Activated CD4-positive, alpha-beta memory T cell treated with anti-CD3 and anti-CD28 coated beads, Interleukin-2, amount 10 ng/mL, durations not matched to agents 7 days and 5 days (primary cell): ENCODE measurements at regions of chr6 and their contacts with region 1.

Region 1: DNA sequence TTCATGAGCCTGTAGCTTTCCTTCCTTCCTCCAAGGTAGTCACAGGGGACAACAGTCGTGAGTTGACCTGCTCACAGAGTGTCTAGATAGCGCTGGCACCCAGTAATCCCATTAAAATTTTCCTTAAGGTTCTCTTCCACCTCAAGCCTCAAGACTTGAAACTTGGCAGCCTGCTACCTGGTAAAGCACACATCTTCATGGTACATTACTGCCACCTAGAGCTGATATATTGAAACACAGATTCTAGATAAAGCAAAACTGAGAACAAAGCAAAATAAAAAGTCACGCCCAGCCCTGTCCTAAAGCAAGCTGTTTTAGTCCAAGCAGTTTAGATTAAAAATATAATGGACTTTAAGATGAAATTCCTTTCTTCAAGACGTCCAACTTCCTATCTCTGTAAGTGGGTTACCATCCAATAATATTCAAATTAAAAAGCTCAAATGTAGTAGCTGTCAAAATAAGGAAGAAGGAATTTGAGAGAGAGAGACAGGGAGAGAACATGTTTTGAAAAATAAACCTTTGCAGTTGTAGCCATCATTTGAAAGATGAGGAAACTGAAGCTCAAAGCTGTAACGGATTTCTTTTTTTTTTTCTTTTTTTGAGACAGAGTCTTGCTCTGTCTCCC is 50.7 kb upstream of the CD83 start:
- DNase-seq: no peak
- H3K4me3 Mint-ChIP-seq: no peak overlapping the region
- H3K27ac Mint-ChIP-seq: no peak overlapping the region
- H3K4me1 Mint-ChIP-seq: peaks cover 20% of the 10 kb centered on the region
- H3K27me3 Mint-ChIP-seq: peaks cover 18% of the 10 kb centered on the region

Region 2: DNA sequence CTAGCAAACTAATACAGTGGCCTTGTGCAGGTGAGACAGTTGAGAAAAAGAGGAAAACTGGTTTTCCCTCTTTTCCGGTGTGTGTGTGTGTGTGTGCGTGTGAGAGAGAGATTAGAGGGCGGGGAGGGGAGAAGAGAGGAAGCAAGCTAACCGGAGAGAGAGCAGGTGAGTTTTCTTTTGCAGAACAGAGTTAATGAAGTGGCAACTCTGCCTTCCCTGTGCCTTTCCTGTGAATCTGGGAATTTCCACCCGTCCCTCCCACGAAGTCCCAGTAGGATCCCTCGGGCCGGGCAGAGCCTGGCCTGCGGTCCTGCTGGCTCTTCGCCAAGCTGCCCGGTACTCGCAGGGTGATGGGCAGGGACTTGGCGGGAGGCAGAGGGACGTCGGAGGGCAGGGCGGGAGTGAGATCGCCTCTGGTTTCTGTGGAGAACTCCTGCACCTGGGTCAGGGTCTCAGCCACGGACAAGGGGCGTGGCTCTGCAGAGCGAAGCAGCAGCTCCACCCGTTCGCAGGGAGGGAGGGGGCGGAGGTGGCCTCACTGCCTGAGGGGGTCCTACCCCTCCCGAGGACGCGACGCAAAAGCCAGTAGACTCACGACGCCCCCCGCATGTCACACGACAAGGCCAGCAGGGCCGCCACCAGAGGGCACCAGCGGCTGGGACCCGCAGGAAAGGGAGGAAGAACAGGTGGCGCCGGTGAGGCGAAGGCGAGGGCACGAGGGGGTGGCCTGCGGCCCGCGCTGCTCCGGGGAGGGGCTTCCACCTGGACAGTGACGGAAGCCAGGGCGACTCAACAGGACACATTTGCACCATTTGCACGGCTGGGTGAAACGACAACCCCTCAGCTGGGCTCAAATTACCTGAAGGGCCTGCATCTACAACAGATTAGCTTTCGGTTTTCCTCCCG is 193.4 kb before region 1 on chr6:
- CTCF ChIA-PET with region 1: interaction called, 21 read pairs
- POLR2A ChIA-PET with region 1: no interaction called
- DNase-seq: peak; percentile 69
- H3K4me3 Mint-ChIP-seq: peak overlapping the region; percentile 63
- H3K27ac Mint-ChIP-seq: no peak overlapping the region
- H3K4me1 Mint-ChIP-seq: peaks cover 10% of the 10 kb centered on the region
- H3K27me3 Mint-ChIP-seq: peaks cover 24% of the 10 kb centered on the region

Region 3: DNA sequence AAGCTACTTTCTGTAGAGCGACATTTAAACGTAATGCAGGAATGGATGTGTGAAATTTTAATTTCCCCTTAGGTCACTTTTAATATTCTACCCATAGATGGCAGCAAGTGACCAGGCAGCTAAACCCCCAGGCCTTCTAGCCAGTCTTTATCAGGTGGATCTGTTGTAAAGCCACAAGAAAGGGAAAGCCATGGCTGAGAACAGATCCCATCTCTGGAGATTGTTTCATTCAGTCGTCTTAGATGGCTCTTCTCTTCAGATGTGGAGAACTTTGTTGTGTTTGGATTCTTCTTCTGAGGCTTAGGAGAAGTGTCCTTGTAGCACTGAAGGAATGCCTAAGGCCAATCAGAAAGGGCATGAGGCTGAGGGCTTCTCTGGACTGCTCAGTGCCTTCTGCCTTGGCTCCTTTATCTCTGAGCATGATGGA is 157.9 kb before region 1 on chr6:
- CTCF ChIA-PET with region 1: interaction called, 36 read pairs
- POLR2A ChIA-PET with region 1: interaction called, 4 read pairs
- DNase-seq: peak; percentile 39
- H3K4me3 Mint-ChIP-seq: no peak overlapping the region
- H3K27ac Mint-ChIP-seq: no peak overlapping the region
- H3K4me1 Mint-ChIP-seq: no peaks in the 10 kb centered on the region
- H3K27me3 Mint-ChIP-seq: peaks cover 53% of the 10 kb centered on the region

Region 4: DNA sequence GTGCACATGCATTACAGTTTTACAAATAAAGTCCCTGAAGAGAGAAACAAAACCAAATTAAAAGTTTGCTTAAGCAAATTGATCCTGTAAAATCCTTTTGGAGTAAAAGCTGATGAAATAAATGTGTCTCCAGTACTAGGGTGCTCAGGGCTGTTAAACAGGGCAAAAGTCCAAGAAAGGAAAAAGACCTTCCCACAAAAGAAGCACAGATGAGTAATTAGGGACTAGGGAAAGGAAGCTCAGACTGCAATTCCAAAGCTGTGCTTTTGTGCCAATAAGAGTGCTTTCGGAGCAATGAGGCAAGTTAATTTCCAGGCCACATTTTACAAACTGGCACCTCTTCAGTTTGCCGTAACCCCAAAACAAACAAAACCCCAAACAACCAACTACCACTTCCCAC is 152.5 kb before region 1 on chr6:
- CTCF ChIA-PET with region 1: interaction called, 36 read pairs
- POLR2A ChIA-PET with region 1: interaction called, 4 read pairs
- DNase-seq: no peak
- H3K4me3 Mint-ChIP-seq: no peak overlapping the region
- H3K27ac Mint-ChIP-seq: no peak overlapping the region
- H3K4me1 Mint-ChIP-seq: no peaks in the 10 kb centered on the region
- H3K27me3 Mint-ChIP-seq: peaks cover 48% of the 10 kb centered on the region

Region 5: DNA sequence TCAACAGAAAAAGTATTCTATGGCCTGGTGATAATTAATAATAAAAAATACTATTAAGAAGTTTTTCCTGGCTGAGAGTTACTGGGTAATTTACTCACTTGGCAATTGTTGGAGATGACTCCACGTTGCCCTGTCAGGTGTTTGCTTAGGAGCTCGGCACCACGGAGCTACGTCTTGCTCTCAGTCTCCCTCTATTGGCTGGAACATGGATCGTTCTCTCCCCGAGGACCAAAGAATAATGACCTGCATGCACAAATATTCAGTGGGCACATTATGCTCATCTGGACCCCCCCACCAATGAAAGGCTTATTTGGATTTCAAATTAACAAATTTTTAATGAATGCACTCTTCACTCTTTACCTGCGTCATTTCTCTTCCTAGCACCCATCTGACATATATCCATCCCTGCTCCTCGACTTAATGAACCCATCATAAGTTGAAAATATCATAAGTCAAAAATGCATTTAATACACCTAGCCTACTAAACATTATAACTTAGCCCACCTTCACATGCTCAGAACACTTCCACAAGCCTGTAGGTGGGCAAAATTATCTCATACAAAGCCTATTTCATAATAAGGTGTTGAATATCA is 20.3 kb before region 1 on chr6:
- CTCF ChIA-PET with region 1: interaction called, 54 read pairs
- POLR2A ChIA-PET with region 1: interaction called, 4 read pairs
- DNase-seq: peak; percentile 49
- H3K4me3 Mint-ChIP-seq: no peak overlapping the region
- H3K27ac Mint-ChIP-seq: no peak overlapping the region
- H3K4me1 Mint-ChIP-seq: no peaks in the 10 kb centered on the region
- H3K27me3 Mint-ChIP-seq: peaks cover 27% of the 10 kb centered on the region

Region 6: GRCh38 chr6:14144678-14145113 is 77.8 kb after region 1 on chr6:
- CTCF ChIA-PET with region 1: interaction called, 11 read pairs
- POLR2A ChIA-PET with region 1: no interaction called
- DNase-seq: peak; percentile 68
- H3K4me3 Mint-ChIP-seq: no peak overlapping the region
- H3K27ac Mint-ChIP-seq: no peak overlapping the region
- H3K4me1 Mint-ChIP-seq: peaks cover 5% of the 10 kb centered on the region
- H3K27me3 Mint-ChIP-seq: no peaks in the 10 kb centered on the region